Calu3 (cell line): ENCODE measurements at regions of chr17 and their contacts with region 1.

Region 1: GRCh38 chr17:41548844-41549595 is 20.9 kb upstream of the KRT19 start:
- DNase-seq: peak; percentile 99
- H3K4me3 Mint-ChIP-seq: peak overlapping the region; percentile 62
- H3K27ac Mint-ChIP-seq: peak overlapping the region; percentile 92
- H3K4me1 Mint-ChIP-seq: peaks cover 91% of the 10 kb centered on the region
- H3K27me3 Mint-ChIP-seq: no peaks in the 10 kb centered on the region
- CTCF ChIP-seq: peak; percentile 98

Region 2: GRCh38 chr17:40909351-40909750 is 639.7 kb before region 1 on chr17:
- CTCF ChIA-PET with region 1: interaction called, 32 read pairs
- intact Hi-C with region 1: loop called (anchors 2 kb)
- DNase-seq: peak; percentile 99
- H3K4me3 Mint-ChIP-seq: no peak overlapping the region
- H3K27ac Mint-ChIP-seq: peak overlapping the region; percentile 86
- H3K4me1 Mint-ChIP-seq: peaks cover 94% of the 10 kb centered on the region
- H3K27me3 Mint-ChIP-seq: no peaks in the 10 kb centered on the region
- CTCF ChIP-seq: peak; percentile 98

Region 3: GRCh38 chr17:41082626-41083025 is 466.4 kb before region 1 on chr17:
- CTCF ChIA-PET with region 1: no interaction called
- intact Hi-C with region 1: no loop called
- DNase-seq: no peak
- H3K4me3 Mint-ChIP-seq: no peak overlapping the region
- H3K27ac Mint-ChIP-seq: peak overlapping the region; percentile 0
- H3K4me1 Mint-ChIP-seq: peaks cover 24% of the 10 kb centered on the region
- H3K27me3 Mint-ChIP-seq: no peaks in the 10 kb centered on the region
- CTCF ChIP-seq: no peak

Region 4: GRCh38 chr17:41308251-41308917 is 240.6 kb before region 1 on chr17:
- CTCF ChIA-PET with region 1: no interaction called
- intact Hi-C with region 1: no loop called
- DNase-seq: no peak
- H3K4me3 Mint-ChIP-seq: no peak overlapping the region
- H3K27ac Mint-ChIP-seq: no peak overlapping the region
- H3K4me1 Mint-ChIP-seq: peaks cover 8% of the 10 kb centered on the region
- H3K27me3 Mint-ChIP-seq: peaks cover 22% of the 10 kb centered on the region
- CTCF ChIP-seq: no peak

Region 5: GRCh38 chr17:41403798-41404671 is 145.0 kb before region 1 on chr17:
- CTCF ChIA-PET with region 1: interaction called, 48 read pairs
- intact Hi-C with region 1: no loop called
- DNase-seq: peak; percentile 81
- H3K4me3 Mint-ChIP-seq: peak overlapping the region; percentile 12
- H3K27ac Mint-ChIP-seq: peak overlapping the region; percentile 92
- H3K4me1 Mint-ChIP-seq: peaks cover 50% of the 10 kb centered on the region
- H3K27me3 Mint-ChIP-seq: no peaks in the 10 kb centered on the region
- CTCF ChIP-seq: no peak

Region 6: GRCh38 chr17:41521574-41522261 is 27.3 kb before region 1 on chr17:
- CTCF ChIA-PET with region 1: interaction called, 471 read pairs
- intact Hi-C with region 1: loop called (anchors 1 kb)
- DNase-seq: peak; percentile 100
- H3K4me3 Mint-ChIP-seq: peak overlapping the region; percentile 95
- H3K27ac Mint-ChIP-seq: peak overlapping the region; percentile 99
- H3K4me1 Mint-ChIP-seq: peaks cover 73% of the 10 kb centered on the region
- H3K27me3 Mint-ChIP-seq: no peaks in the 10 kb centered on the region
- CTCF ChIP-seq: peak; percentile 11

Region 7: GRCh38 chr17:41567317-41567716 is 18.3 kb after region 1 on chr17:
- CTCF ChIA-PET with region 1: interaction called, 13 read pairs
- intact Hi-C with region 1: no loop called
- DNase-seq: no peak
- H3K4me3 Mint-ChIP-seq: no peak overlapping the region
- H3K27ac Mint-ChIP-seq: no peak overlapping the region
- H3K4me1 Mint-ChIP-seq: no peaks in the 10 kb centered on the region
- H3K27me3 Mint-ChIP-seq: peaks cover 82% of the 10 kb centered on the region
- CTCF ChIP-seq: no peak

Region 8: DNA sequence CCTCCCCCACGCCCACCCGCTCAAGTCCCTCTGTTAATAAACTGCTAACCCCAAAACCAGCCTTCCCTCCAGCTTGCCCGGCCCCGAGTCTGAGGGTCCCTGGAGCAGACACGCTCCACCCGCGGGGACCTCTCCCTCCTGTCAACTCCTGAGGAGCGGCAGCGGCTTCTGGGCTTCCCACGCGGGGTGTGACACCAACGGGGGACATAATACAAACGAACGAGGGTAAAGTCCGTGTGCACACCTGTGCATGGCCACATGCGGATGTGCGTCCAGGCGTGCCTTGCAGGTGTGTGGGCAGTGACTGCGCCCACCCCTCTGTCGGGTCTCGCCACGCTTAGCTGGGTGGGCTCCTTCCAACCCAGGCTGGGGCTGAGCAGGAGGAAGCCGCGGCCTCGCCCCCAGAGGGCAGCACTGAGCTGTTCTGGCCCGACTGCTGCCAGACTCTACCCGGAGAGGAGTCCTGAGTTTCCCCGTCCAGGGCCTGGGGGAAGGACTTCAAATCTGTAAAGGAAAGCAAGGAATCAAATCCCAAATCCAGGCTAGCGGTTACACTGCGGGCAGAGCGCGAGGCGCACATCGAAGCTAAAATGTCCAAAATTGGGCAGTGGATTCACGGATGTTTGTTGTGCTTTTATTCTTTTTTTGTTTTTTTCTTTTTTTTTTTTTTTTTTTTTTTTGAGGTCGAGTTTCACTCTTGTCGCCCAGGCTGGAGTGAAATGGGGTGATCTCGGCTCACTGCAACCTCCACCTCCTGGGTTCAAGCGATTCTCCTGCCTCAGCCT is 99.6 kb after region 1 on chr17:
- CTCF ChIA-PET with region 1: interaction called, 230 read pairs
- intact Hi-C with region 1: loop called (anchors 1 kb)
- DNase-seq: peak; percentile 98
- H3K4me3 Mint-ChIP-seq: peak overlapping the region; percentile 64
- H3K27ac Mint-ChIP-seq: peak overlapping the region; percentile 62
- H3K4me1 Mint-ChIP-seq: peaks cover 33% of the 10 kb centered on the region
- H3K27me3 Mint-ChIP-seq: no peaks in the 10 kb centered on the region
- CTCF ChIP-seq: peak; percentile 93

Region 9: DNA sequence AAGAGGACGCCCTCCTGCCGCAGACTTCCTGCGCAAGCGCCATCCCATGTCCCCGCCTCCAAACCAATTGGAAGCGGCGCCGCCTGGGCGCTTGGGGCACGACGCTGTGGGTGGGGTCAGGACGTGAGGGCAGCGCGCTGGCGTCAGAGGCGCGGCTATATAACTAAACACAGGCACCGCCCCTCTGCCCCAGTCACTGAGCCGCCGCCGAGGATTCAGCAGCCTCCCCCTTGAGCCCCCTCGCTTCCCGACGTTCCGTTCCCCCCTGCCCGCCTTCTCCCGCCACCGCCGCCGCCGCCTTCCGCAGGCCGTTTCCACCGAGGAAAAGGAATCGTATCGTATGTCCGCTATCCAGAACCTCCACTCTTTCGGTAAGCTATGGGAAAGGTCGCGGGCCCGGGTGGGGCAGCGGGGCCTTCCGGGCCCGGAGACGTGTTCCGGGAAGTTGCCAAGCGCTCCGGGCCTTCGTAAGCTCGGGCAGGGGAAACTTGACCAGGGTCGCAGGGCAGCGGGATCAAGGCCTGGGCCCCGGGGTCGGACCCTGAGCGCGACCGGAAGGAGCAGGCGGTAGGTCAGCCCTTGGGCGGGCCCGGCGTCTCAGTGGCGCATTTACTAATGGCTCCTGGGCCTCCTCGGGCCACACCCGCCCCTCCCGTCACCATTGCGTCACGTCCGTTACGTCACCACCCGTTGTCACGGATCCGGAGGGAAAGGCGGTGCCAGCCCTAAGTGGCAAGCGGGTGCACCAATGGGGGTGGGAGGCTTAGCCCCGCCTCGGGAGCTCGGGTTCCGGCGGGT is 139.9 kb after region 1 on chr17 and contains the start of gene EIF1:
- CTCF ChIA-PET with region 1: interaction called, 12 read pairs
- intact Hi-C with region 1: no loop called
- DNase-seq: peak; percentile 100
- H3K4me3 Mint-ChIP-seq: peak within 1 kb of the TSS; percentile 86
- H3K27ac Mint-ChIP-seq: peak within 1 kb of the TSS; percentile 99
- H3K4me1 Mint-ChIP-seq: peaks cover 36% of the 10 kb centered on the region
- H3K27me3 Mint-ChIP-seq: no peaks in the 10 kb centered on the region
- CTCF ChIP-seq: no peak
- total RNA-seq, gene EIF1: 807 and 937 TPM in 2 replicates

Region 10: GRCh38 chr17:42050393-42051012 is 501.5 kb after region 1 on chr17 and contains the start of gene C17orf113:
- CTCF ChIA-PET with region 1: no interaction called
- intact Hi-C with region 1: no loop called
- DNase-seq: peak; percentile 85
- H3K4me3 Mint-ChIP-seq: peak within 1 kb of the TSS; percentile 76
- H3K27ac Mint-ChIP-seq: peak within 1 kb of the TSS; percentile 40
- H3K4me1 Mint-ChIP-seq: peaks cover 7% of the 10 kb centered on the region
- H3K27me3 Mint-ChIP-seq: peaks cover 44% of the 10 kb centered on the region
- CTCF ChIP-seq: peak; percentile 69
- total RNA-seq, gene C17orf113: 4.2 and 4.5 TPM in 2 replicates